Left ventricle myocardium superior (tissue), 1 donor: ENCODE measurements at regions of chr6 and their contacts with region 1.

Region 1: DNA sequence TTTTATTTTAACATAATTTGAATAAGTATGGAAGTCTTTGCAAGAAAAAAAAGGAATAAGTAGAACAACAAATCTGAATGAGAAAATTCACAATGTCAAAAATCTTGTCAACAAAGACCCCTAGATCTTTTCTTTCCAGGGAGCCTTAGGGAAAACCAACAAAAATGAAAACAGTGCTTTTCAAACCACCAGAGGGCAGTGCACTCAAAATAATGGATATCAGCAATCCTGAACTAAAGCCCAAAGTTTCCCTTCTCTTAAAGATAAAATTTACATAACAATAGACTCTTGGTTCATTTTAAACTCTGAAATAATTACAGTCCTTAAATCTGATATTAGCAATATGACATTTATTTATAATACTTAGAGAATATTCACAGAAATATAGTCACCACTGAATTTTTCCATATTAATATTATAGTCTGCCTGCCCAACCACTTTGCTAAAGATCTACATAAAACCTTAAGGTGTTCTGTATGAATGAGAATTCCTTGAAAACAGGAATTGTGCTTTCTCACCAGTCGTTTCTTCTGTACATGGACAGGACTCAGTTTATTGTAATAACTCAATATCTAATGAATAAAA is 105.3 kb upstream of the BMP5 start:
- DNase-seq: no peak
- ATAC-seq: peak; percentile 47

Region 2: DNA sequence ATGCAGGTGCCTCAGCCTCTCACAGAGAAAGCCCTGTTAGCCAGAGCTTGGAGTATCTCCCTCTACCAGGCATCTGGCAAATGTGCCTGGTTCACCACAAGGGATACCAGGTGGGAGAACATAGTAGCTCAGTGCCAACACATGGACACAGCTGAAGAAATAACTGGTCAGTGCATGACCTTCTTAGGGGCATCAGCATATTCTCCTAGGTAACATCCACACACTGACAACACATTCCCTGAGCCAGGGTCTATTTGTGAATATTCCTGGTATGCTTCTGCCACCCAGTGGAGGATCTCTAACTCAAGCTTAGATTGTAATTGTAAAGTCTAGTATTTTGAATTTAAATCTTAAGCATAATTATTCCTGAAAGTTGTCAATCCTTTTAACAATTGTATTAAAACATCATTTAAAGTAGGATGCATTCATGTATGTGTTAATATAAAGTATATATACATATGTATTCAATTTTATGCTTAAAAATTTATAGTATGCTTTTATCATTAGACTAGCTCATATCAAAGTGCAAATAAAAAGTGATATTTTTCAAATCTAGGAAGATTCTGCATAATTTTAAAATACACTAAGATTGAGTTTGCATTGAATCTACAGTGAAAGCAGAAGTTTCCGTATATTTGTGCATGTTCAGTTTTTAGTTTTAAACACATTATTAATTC is 311.9 kb after region 1 on chr6:
- intact Hi-C with region 1: loop called (anchors 1 kb)
- DNase-seq: no peak
- ATAC-seq: peak; percentile 89